Activated B cell treated with CpG ODN at 0.5 μM for 24 hours (primary cell): ENCODE measurements at regions of chr22 and their contacts with region 1.

Region 1: DNA sequence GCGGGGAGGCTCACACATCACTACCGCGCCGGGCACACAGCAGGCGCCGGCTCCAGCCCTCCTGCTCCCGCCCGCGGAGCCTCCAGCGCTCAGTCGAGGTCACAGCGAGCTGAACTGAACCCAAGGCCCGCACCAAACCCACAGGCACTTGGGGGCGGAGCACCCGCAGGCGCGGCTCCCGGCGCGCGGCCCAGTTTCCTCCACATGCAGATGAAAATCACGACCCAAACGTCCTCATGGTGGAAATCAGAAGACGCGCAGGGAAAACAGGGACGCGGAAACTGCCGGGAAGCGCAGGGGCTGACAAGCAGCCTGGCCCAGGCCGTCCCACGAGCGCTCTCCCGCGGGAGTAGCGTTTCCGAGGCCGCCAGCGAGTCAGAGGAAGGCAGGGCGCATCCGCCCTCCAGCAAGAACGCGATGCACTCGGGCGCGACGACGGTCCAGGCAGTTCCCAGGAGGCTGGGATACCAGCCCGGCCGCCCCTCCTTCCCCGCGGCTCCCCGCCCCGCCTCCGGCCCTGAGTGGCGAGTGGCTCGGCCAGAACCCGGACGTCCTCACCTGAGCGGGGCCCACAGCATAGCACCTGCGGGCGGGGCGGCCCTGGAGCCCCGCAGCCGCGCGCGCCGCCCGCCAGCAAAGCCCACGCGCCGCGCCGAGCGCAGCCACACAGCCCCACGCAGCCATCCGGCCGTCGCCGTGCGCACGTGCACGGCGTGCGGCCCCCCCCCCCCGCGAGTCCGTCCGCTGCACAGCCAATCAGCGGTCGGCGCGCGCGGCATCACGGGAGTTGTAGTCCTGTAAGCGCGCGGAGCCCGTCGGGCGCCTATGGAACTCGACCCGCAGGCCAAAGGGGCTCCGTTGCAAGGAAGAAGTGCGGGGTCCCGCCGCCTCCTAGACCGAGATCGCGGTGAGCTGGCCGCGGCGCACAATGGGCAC is at the start of gene HDHD5:
- DNase-seq: peak; percentile 82
- ATAC-seq: peak; percentile 91
- H3K4me3 Mint-ChIP-seq: peak within 1 kb of the TSS; percentile 83
- H3K27ac Mint-ChIP-seq: peak within 1 kb of the TSS; percentile 59
- H3K4me1 Mint-ChIP-seq: peaks cover 26% of the 10 kb centered on the region
- H3K27me3 Mint-ChIP-seq: no peaks in the 10 kb centered on the region
- CTCF ChIP-seq: no peak
- total RNA-seq, gene HDHD5: 23.9 and 25.2 TPM in 2 replicates

Region 2: GRCh38 chr22:16866167-16866566 is 292.7 kb before region 1 on chr22:
- CTCF ChIA-PET with region 1: no interaction called
- POLR2A ChIA-PET with region 1: no interaction called
- intact Hi-C with region 1: no loop called
- DNase-seq: no peak
- ATAC-seq: no peak
- H3K4me3 Mint-ChIP-seq: no peak overlapping the region
- H3K27ac Mint-ChIP-seq: no peak overlapping the region
- H3K4me1 Mint-ChIP-seq: no peaks in the 10 kb centered on the region
- H3K27me3 Mint-ChIP-seq: peaks cover 1% of the 10 kb centered on the region
- CTCF ChIP-seq: no peak

Region 3: GRCh38 chr22:17084554-17085276 is 74.1 kb before region 1 on chr22 and contains the start of gene IL17RA:
- CTCF ChIA-PET with region 1: no interaction called
- POLR2A ChIA-PET with region 1: interaction called, 3 read pairs
- intact Hi-C with region 1: loop called (anchors 2 kb)
- DNase-seq: peak; percentile 96
- ATAC-seq: peak; percentile 99
- H3K4me3 Mint-ChIP-seq: peak within 1 kb of the TSS; percentile 89
- H3K27ac Mint-ChIP-seq: peak within 1 kb of the TSS; percentile 81
- H3K4me1 Mint-ChIP-seq: peaks cover 40% of the 10 kb centered on the region
- H3K27me3 Mint-ChIP-seq: no peaks in the 10 kb centered on the region
- CTCF ChIP-seq: no peak
- total RNA-seq, gene IL17RA: 15.7 and 18.1 TPM in 2 replicates

Region 4: GRCh38 chr22:17117890-17118289 is 40.9 kb before region 1 on chr22:
- CTCF ChIA-PET with region 1: no interaction called
- POLR2A ChIA-PET with region 1: no interaction called
- intact Hi-C with region 1: no loop called
- DNase-seq: no peak
- ATAC-seq: no peak
- H3K4me3 Mint-ChIP-seq: peak overlapping the region; percentile 52
- H3K27ac Mint-ChIP-seq: no peak overlapping the region
- H3K4me1 Mint-ChIP-seq: peaks cover 35% of the 10 kb centered on the region
- H3K27me3 Mint-ChIP-seq: peaks cover 23% of the 10 kb centered on the region
- CTCF ChIP-seq: no peak

Region 5: GRCh38 chr22:17589843-17590375 is 431.1 kb after region 1 on chr22:
- CTCF ChIA-PET with region 1: no interaction called
- POLR2A ChIA-PET with region 1: no interaction called
- intact Hi-C with region 1: loop called (anchors 5 kb)
- DNase-seq: no peak
- ATAC-seq: no peak
- H3K4me3 Mint-ChIP-seq: no peak overlapping the region
- H3K27ac Mint-ChIP-seq: no peak overlapping the region
- H3K4me1 Mint-ChIP-seq: peaks cover 18% of the 10 kb centered on the region
- H3K27me3 Mint-ChIP-seq: no peaks in the 10 kb centered on the region
- CTCF ChIP-seq: no peak

Region 6: DNA sequence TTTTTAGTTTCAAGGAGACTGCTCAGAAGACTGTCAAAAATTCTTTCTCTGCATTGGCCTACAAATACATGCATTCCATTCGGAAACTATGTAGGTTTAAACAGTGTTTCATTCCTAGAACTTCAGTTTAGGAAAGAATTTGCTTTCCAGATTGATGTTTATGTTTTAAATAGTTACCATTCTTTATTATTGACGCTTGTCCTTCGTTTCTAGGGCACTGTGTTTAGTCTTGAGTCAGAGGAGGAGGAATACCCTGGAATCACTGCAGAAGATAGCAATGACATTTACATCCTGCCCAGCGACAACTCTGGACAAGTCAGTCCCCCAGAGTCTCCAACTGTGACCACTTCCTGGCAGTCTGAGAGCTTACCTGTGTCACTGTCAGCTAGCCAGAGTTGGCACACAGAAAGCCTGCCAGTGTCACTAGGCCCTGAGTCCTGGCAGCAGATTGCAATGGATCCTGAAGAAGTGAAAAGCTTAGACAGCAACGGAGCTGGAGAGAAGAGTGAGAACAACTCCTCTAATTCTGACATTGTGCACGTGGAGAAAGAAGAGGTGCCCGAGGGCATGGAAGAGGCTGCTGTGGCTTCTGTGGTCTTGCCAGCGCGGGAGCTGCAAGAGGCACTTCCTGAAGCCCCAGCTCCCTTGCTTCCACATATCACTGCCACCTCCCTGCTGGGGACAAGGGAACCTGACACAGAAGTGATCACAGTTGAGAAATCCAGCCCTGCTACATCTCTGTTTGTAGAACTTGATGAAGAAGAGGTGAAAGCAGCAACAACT is 567.8 kb after region 1 on chr22:
- CTCF ChIA-PET with region 1: no interaction called
- POLR2A ChIA-PET with region 1: no interaction called
- intact Hi-C with region 1: no loop called
- DNase-seq: no peak
- ATAC-seq: no peak
- H3K4me3 Mint-ChIP-seq: no peak overlapping the region
- H3K27ac Mint-ChIP-seq: peak overlapping the region; percentile 36
- H3K4me1 Mint-ChIP-seq: peaks cover 7% of the 10 kb centered on the region
- H3K27me3 Mint-ChIP-seq: no peaks in the 10 kb centered on the region
- CTCF ChIP-seq: no peak